Mucosa of descending colon (tissue), 3 donors: ENCODE measurements at regions of chr17 and their contacts with region 1.

Region 1: GRCh38 chr17:68771867-68772515 is 170.8 kb upstream of the FAM20A start:
- DNase-seq: no peak
- ATAC-seq: peak; percentile 63
- H3K4me3 ChIP-seq: no peak overlapping the region
- H3K4me1 ChIP-seq: no peaks in the 10 kb centered on the region
- CTCF ChIP-seq: peak; percentile 11

Region 2: GRCh38 chr17:69235338-69235930 is 463.4 kb after region 1 on chr17:
- intact Hi-C with region 1: loop called (anchors 5 to 10 kb)
- DNase-seq: peak; percentile 48 to 91 (median 57)
- ATAC-seq: peak; percentile 89
- H3K4me3 ChIP-seq: no peak overlapping the region
- H3K4me1 ChIP-seq: no peaks in the 10 kb centered on the region
- CTCF ChIP-seq: peak; percentile 20

Region 3: DNA sequence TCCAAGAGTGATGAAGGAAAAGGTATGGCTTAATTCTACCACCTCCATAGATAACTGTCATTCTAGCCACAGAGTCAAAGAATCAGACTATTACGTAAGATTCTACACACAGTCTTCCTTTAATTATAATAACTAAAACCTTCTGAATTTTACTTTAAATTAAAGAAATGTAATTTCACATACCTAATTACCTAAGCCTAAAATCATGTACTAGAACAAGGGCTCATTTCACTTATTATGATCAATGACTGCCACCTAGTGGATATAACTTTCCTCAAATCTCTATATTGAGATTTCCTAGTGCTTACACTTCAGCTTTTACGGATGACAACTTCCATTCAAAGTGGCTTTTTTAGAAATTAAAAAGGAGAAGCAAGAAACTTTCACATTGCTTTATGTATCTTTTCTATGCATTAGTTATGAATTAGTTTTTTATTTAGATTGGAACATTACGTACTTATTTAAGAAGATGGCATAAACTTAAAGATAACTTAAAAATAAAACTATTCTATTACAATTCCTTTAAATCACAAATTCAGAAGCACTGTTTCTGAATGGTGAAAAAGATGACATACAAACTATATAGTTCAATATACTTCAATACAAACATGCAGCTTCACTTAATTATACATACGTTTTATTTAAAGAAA is 474.9 kb after region 1 on chr17:
- intact Hi-C with region 1: loop called (anchors 2 to 10 kb)
- DNase-seq: no peak
- ATAC-seq: peak; percentile 55
- H3K4me3 ChIP-seq: no peak overlapping the region
- H3K4me1 ChIP-seq: no peaks in the 10 kb centered on the region
- CTCF ChIP-seq: no peak